GM10248 (cell line): ENCODE measurements at regions of chr5 and their contacts with region 1.

Region 1: DNA sequence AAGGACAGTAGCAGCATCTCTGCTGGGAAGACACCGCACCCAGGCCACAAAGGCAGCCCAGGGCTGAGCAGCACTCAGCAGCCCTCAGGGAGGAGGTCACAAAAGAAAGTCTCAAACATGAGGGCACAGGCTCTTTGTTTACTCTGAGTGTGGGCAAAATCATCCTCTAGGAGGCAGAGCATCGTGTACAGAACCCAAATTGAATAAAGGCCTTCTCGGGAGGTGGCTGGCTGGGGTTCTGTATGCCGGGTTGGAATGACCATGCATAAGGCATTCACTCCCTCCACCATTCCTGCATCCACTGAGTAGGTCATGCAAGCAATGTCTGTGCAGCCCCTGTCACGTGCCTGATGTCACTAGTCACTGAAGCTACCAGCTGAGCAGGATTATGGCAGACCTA is 412.8 kb downstream of the SPOCK1 start:
- DNase-seq: no peak
- CTCF ChIP-seq: no peak

Region 2: GRCh38 chr5:136802383-136802782 is 284.0 kb before region 1 on chr5:
- CTCF ChIA-PET with region 1: no interaction called
- POLR2A ChIA-PET with region 1: no interaction called
- DNase-seq: no peak
- CTCF ChIP-seq: no peak

Region 3: DNA sequence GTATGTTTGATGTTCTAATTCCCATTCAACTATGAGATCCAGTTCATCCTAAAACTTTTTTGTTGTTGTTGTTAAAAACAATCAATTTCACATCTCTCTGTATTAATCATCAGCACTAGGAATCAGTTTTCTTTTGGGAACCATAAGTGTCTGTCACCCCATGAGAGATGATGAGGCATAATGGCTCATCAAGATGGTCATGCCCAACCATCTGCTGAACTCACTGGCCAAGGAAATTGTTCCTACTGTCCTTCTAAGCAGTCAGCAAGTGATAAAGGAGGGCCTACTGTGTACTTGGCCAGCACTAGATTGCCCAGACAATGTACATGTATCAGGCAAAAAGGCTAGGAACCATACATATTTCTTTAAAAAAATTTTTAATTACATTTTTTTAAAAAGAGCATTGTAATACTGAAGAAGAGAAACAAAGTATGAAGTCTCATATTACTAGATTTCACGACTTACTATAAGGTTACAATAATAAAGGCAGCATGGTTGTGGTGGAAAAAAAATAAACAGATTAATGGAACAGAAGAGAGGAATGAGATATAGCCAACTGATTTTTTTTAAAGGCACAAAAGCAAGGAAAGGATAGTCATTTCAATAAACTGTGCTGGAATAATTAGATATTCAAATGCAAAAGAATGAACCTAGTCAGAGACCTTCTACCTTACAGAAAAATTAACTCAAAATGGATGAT is 45.6 kb before region 1 on chr5:
- CTCF ChIA-PET with region 1: no interaction called
- POLR2A ChIA-PET with region 1: no interaction called
- DNase-seq: no peak
- CTCF ChIP-seq: no peak

Region 4: DNA sequence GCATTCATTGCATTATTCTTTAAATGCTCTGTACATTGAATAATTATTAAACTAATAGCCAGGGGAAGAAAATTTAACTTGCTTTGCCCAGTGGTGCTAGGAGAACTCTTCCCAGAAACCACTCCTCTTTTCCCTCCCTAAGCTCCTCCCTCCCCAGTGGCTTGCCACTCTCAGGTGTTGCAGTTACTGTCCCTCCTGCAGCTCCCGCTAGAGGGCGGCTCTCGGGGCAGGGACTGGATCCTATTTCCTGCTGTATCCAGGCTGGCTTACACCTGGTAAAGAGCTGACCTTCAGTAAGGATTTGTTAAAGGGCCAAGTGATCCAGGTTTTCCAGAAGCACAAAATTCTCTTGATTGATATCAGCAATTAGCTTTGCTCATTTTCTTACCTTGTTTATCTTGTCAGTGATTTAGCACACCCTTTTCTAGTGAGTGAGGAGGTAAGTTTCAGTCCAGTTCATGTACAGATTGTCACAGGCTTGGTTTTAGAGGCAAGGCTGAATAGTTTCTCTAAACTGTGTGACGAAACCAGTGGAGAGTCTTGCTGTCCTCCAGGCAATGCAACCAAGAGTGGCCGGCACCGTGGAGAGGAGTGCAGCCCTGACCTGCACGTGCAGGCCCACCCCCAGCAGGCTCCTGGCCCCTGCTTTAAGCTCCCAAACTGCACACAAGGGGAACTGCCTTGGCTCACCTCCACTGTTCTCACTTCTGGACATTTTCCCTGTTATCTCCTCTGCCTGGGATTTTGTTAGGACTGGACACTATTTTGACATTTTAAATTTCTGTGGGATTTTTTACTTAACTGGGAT is 11.0 kb before region 1 on chr5:
- CTCF ChIA-PET with region 1: interaction called, 10 read pairs
- POLR2A ChIA-PET with region 1: no interaction called
- DNase-seq: peak; percentile 69
- CTCF ChIP-seq: peak; percentile 54

Region 5: DNA sequence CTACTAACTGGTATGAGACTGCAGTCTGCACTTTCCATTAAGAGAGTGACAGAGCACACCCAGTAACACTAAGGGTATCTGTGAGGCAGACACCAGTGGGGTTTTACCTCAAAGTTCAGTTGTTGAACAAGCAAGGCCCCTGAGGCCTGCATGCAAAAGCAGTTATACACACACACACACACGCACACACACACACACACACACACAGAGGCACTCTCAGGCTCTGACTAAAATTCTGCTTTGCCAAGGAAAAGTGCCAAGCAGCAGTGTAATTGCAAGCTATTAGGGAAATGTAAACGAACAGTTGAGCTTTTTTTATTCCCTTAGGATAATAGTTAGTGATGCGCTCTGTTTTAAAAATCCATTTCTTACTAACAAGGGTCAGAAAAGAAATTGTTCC is 35.7 kb after region 1 on chr5:
- CTCF ChIA-PET with region 1: no interaction called
- POLR2A ChIA-PET with region 1: no interaction called
- DNase-seq: no peak
- CTCF ChIP-seq: no peak